Adrenal gland (tissue), 19 donors: ENCODE measurements at regions of chr7 and their contacts with region 1.

Region 1: DNA sequence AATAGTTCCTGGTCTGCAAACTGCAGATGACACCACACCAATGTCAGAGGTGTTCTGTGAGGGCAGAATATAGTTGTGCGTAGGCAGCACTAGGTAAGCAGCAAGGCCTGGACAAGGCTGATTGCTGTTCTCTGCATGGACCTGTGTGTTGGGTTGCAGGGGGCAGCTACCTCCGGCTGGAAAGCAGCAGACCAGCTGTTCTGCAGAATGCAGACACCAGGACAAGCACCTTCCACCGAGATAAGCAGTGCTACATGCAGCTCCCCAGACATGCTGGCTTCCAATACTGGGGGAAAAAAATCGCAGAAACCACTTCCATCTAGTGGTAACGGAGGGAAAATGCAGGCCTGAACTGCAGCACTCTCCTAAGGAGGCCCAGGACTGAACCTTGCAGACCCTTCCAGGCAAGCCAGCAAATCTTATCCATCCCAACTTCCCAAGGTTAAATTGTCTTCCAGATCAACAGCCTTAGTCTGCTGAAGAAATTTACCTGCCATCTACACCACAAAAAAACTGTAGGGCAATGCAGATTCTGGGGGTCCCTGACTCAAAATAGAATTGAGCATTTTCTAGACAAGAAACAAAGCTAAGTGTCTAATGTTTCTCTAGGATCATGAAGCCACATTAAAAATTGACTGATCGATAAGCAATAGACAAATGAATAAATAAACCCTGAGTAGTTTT is 50.5 kb upstream of the COBL start:
- DNase-seq: peak in 6 of 7 donors; percentile 20 to 53 (median 34)
- H3K4me3 ChIP-seq: no peak overlapping the region
- H3K27ac ChIP-seq: no peak overlapping the region
- H3K4me1 ChIP-seq: no peaks in the 10 kb centered on the region
- H3K27me3 ChIP-seq: no peaks in the 10 kb centered on the region
- CTCF ChIP-seq: peak; percentile 42 to 70 (median 64)
- POLR2A ChIP-seq: no peak

Region 2: DNA sequence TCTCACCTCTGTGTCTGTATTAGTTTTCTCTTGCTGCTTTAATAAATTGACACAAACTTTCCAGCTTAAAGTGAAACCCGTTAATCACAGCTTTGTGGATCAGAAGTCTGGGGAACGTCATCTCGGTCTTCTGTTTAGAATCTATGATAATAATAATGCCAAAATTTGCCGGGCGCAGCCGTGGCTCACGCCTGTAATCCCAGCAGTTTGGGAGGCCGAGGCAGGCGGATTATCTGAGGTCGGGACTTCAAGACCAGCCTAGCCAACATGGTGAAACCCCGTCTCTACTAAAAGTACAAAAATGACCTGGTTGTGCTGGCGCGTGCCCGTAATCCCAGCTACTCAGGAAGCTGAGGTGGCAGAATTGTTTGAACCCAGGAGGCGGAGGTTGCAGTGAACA is 1265.2 kb before region 1 on chr7:
- intact Hi-C with region 1: loop called in 1 of 2 experiments (anchors 10 kb)
- DNase-seq: no peak
- H3K4me3 ChIP-seq: no peak overlapping the region
- H3K27ac ChIP-seq: no peak overlapping the region
- H3K4me1 ChIP-seq: no peaks in the 10 kb centered on the region
- H3K27me3 ChIP-seq: no peaks in the 10 kb centered on the region
- CTCF ChIP-seq: no peak
- POLR2A ChIP-seq: no peak

Region 3: DNA sequence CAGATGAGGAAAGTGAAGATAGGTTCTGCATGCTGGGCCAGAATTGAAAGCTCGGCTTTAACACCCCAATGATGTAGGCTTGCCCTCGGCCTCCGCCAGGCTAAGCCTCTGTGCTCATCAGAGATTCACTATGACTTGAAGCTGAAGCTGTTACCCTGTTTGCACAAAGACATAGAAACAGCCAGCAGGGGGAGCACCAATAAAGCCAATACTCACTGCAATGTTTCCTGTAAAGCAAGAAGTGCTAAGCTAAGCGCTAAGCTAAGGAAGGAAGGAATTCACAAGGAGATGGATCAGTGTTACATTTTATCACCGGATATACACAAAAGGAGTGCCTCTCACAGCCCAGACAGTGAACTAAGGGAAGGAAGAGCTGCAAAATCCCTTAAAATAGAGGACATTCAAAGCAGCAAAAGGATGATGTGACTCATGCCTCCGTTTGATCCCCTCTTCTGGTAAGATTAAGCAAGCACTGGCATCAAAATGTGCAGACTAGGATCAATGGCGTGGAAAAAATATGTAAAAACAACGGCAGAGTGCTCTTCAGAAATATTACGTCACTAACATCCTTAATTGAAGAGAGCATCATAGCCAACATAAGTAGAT is 204.2 kb before region 1 on chr7:
- intact Hi-C with region 1: loop called (anchors 5 kb)
- DNase-seq: peak; percentile 73 to 92 (median 82)
- H3K4me3 ChIP-seq: no peak overlapping the region
- H3K27ac ChIP-seq: no peak overlapping the region
- H3K4me1 ChIP-seq: no peaks in the 10 kb centered on the region
- H3K27me3 ChIP-seq: no peaks in the 10 kb centered on the region
- CTCF ChIP-seq: peak; percentile 70 to 87 (median 74)
- POLR2A ChIP-seq: no peak